ENCODE measurements at regions of chr15 and their contacts with region 1.

Region 1: GRCh38 chr15:29835301-29835700 is 13.0 kb upstream of the TJP1 start:
- DNase-seq: no peak
- H3K4me3 ChIP-seq: no peak overlapping the region
- H3K27ac ChIP-seq: no peak overlapping the region
- H3K4me1 ChIP-seq: peaks cover 11% of the 10 kb centered on the region; the same call in 1 of the 2 replicates
- H3K27me3 ChIP-seq: no peaks in the 10 kb centered on the region
- CTCF ChIP-seq: no peak

Region 2: GRCh38 chr15:30043211-30043655 is 207.9 kb after region 1 on chr15:
- CTCF ChIA-PET with region 1: interaction called, 15 read pairs
- POLR2A ChIA-PET with region 1: no interaction called
- intact Hi-C with region 1: no loop called
- DNase-seq: no peak
- H3K4me3 ChIP-seq: no peak overlapping the region
- H3K27ac ChIP-seq: no peak overlapping the region
- H3K4me1 ChIP-seq: no peaks in the 10 kb centered on the region
- H3K27me3 ChIP-seq: no peaks in the 10 kb centered on the region; the same call in 1 of the 2 replicates
- CTCF ChIP-seq: peak; percentile 42; the same call in 1 of the 2 replicates

Measured in PC-9 (cell line).